GM12878 (cell line): ENCODE measurements at regions of chr6 and their contacts with region 1.

Region 1: DNA sequence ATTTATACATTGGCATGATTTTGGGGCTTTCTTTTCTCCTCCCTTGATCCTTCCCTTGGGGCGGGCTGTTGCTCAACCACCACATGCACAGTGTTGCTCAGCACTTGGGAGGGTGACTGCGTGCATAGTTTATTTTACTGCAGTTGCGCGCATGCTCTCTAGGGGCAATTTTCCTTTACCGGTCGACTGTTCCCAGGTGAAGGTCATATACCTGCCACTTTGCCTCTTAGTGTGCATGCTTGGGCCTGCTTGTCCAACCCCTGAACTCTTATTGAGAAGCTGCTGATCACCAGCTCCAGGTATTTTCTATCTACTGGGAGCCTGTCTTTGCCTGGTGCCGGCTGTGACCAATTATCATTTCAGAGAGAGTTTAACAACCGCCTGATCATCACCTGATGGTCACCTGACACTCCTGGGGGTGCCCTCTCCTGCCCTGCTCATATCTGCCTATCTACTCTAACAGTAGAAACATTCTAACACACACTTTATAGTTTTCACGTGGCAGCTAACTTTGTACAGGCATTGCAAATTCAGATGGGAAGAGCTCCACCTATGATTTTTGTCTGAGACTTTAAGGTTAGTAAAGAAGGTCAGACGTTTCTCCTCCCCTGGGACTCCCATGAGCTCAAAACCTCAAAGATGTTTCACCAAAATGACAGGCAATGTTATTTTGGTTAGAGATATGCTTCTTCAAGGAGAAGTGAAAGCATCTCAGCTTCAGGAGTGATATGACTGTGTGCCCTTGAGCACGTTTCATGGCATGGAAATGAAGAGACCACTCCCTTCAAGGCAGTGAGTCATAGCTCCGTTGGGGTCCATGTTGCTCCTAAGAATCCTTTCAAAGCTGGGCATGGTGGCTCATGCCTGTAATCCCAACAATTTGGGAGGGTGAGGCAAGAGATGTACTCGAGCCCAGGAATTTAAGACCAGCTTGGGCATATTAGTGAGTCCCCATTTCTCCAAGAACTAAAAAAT is 227.5 kb upstream of the MYLIP start:
- DNase-seq: peak; percentile 99
- ATAC-seq: peak; percentile 90
- H3K4me3 ChIP-seq: no peak overlapping the region; the same call in 1 of the 2 replicates
- H3K27ac ChIP-seq: peak overlapping the region; percentile 96
- H3K4me1 ChIP-seq: peaks cover 60% of the 10 kb centered on the region
- H3K27me3 ChIP-seq: no peaks in the 10 kb centered on the region
- CTCF ChIP-seq: peak in 1 of 3 experiments; percentile 17; a peak in 1 of 6 replicates
- EP300 ChIP-seq: peak; percentile 97 to 99
- POLR2A ChIP-seq: no peak
- RAD21 ChIP-seq: peak; percentile 35; the same call in 1 of the 2 replicates

Region 2: DNA sequence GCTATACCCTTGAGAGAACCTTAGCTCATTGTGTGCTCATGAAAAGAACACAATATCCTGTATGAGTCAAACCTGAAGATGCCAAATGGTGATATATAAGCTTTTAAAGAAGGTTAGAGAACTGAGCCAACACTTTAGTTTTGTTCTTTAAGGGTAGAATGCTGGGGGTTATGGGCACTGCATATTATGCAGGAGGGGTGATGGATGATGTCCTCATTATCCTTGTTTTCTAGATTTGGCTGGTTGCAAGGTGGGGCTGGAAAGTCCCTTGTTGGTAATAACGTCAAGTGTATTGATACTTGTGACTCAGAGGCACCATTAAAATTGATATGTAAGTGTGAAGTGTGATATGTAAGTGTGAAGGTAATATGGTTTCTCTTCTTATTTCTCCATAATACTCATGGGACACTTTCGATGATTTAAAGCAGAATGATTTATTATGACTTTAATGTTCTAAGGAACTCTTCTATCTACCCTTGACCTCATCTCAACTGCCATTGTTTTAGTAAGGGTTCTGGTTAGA is 124.9 kb before region 1 on chr6:
- CTCF ChIA-PET with region 1: interaction called, 28 read pairs
- POLR2A ChIA-PET with region 1: interaction called, 25 read pairs
- RAD21 ChIA-PET with region 1: interaction called, 130 read pairs
- SMC1A ChIA-PET with region 1: interaction called, 198 read pairs
- in situ Hi-C with region 1: no loop called
- intact Hi-C with region 1: loop called (anchors 2 kb)
- DNase-seq: peak; percentile 55
- ATAC-seq: peak; percentile 89
- H3K4me3 ChIP-seq: no peak overlapping the region
- H3K27ac ChIP-seq: no peak overlapping the region
- H3K4me1 ChIP-seq: peaks cover 7% of the 10 kb centered on the region
- H3K27me3 ChIP-seq: no peaks in the 10 kb centered on the region
- CTCF ChIP-seq: no peak
- EP300 ChIP-seq: peak; percentile 85 to 89; a peak in 2 of 4 replicates
- POLR2A ChIP-seq: no peak
- RAD21 ChIP-seq: 0 out of 2 replicates have a peak, but pooled peaks have one; percentile 16

Region 3: DNA sequence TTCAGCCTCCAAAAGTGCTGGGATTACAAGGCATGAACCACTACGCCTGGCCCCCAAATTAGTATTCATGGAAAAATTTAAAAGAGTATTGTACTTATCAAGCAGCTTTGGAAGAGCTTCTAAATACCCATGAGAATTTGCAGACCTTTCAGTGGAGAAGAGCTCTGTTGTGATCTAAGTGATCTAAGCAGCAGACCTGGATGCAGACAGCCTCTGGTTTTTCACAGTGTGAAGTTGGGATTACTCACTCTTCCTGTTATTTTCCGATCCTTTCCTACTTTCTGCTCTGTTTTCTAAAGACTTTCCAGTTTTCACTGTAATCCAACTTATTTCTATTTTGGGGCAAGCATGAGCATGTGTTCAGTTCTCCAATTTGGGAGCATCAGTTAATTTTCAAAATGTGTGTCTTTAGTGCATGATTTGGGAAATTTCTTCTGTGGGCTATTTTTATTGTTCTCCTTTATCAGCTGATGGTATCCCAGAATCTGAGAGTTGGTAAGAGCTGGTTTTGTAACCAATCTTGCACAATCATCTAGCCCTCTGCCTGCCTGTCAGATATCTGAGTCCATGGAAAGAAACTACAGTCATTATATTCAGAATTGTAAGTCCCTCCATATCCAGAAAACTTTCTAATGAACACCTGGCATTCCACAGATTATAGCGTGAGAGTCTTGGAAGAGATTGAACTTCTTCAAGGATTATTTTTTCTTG is 30.9 kb before region 1 on chr6:
- CTCF ChIA-PET with region 1: interaction called, 4 read pairs
- POLR2A ChIA-PET with region 1: interaction called, 12 read pairs
- RAD21 ChIA-PET with region 1: interaction called, 33 read pairs
- SMC1A ChIA-PET with region 1: interaction called, 183 read pairs
- in situ Hi-C with region 1: no loop called
- intact Hi-C with region 1: no loop called
- DNase-seq: no peak
- ATAC-seq: no peak
- H3K4me3 ChIP-seq: no peak overlapping the region
- H3K27ac ChIP-seq: no peak overlapping the region
- H3K4me1 ChIP-seq: no peaks in the 10 kb centered on the region
- H3K27me3 ChIP-seq: no peaks in the 10 kb centered on the region
- CTCF ChIP-seq: no peak
- EP300 ChIP-seq: no peak
- POLR2A ChIP-seq: no peak
- RAD21 ChIP-seq: no peak

Region 4: DNA sequence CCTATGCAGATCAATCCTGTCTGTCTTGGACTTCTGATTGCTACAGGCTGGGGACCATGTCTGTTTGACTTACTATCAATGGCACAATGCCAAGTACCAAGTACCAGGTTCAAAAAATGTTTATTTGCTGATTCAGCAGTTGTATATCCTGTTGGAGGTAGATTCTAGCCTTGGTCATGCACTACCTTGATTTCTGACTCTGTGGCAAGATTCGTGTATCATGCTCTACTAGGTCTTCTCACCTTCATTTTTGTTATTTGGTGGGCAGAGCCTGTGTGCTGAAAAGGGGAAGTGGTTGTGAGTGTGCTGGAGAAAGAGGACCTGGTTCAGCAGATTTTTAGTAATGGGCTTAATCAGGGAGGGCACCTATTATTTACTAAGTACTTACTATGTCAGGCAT is 35.1 kb after region 1 on chr6:
- CTCF ChIA-PET with region 1: interaction called, 23 read pairs
- POLR2A ChIA-PET with region 1: interaction called, 17 read pairs
- RAD21 ChIA-PET with region 1: interaction called, 36 read pairs
- SMC1A ChIA-PET with region 1: interaction called, 45 read pairs
- in situ Hi-C with region 1: no loop called
- intact Hi-C with region 1: no loop called
- DNase-seq: peak; percentile 75
- ATAC-seq: peak; percentile 97
- H3K4me3 ChIP-seq: no peak overlapping the region
- H3K27ac ChIP-seq: 0 out of 2 replicates have a peak overlapping the region, but pooled peaks have one; percentile 13
- H3K4me1 ChIP-seq: peaks cover 9% of the 10 kb centered on the region
- H3K27me3 ChIP-seq: no peaks in the 10 kb centered on the region
- CTCF ChIP-seq: no peak
- EP300 ChIP-seq: peak in 1 of 2 experiments; percentile 65; a peak in 1 of 4 replicates
- POLR2A ChIP-seq: no peak
- RAD21 ChIP-seq: no peak

Region 5: GRCh38 chr6:16043171-16044135 is 142.0 kb after region 1 on chr6:
- CTCF ChIA-PET with region 1: interaction called, 6 read pairs
- POLR2A ChIA-PET with region 1: interaction called, 6 read pairs
- RAD21 ChIA-PET with region 1: interaction called, 37 read pairs
- SMC1A ChIA-PET with region 1: interaction called, 37 read pairs
- in situ Hi-C with region 1: no loop called
- intact Hi-C with region 1: loop called (anchors 5 kb)
- DNase-seq: peak; percentile 62
- ATAC-seq: peak; percentile 91
- H3K4me3 ChIP-seq: no peak overlapping the region
- H3K27ac ChIP-seq: peak overlapping the region; percentile 59
- H3K4me1 ChIP-seq: peaks cover 29% of the 10 kb centered on the region
- H3K27me3 ChIP-seq: no peaks in the 10 kb centered on the region
- CTCF ChIP-seq: no peak
- EP300 ChIP-seq: peak; percentile 27 to 58; a peak in 2 of 4 replicates
- POLR2A ChIP-seq: no peak
- RAD21 ChIP-seq: no peak

Region 6: GRCh38 chr6:16168858-16169257 is 267.4 kb after region 1 on chr6:
- CTCF ChIA-PET with region 1: interaction called, 12 read pairs
- POLR2A ChIA-PET with region 1: interaction called, 3 read pairs
- RAD21 ChIA-PET with region 1: interaction called, 19 read pairs
- SMC1A ChIA-PET with region 1: interaction called, 10 read pairs
- in situ Hi-C with region 1: no loop called
- intact Hi-C with region 1: no loop called
- DNase-seq: peak; percentile 32
- ATAC-seq: peak; percentile 86
- H3K4me3 ChIP-seq: no peak overlapping the region
- H3K27ac ChIP-seq: no peak overlapping the region
- H3K4me1 ChIP-seq: peaks cover 13% of the 10 kb centered on the region
- H3K27me3 ChIP-seq: no peaks in the 10 kb centered on the region
- CTCF ChIP-seq: peak; percentile 56 to 66 (median 65)
- EP300 ChIP-seq: no peak
- POLR2A ChIP-seq: no peak
- RAD21 ChIP-seq: peak; percentile 87

Region 7: DNA sequence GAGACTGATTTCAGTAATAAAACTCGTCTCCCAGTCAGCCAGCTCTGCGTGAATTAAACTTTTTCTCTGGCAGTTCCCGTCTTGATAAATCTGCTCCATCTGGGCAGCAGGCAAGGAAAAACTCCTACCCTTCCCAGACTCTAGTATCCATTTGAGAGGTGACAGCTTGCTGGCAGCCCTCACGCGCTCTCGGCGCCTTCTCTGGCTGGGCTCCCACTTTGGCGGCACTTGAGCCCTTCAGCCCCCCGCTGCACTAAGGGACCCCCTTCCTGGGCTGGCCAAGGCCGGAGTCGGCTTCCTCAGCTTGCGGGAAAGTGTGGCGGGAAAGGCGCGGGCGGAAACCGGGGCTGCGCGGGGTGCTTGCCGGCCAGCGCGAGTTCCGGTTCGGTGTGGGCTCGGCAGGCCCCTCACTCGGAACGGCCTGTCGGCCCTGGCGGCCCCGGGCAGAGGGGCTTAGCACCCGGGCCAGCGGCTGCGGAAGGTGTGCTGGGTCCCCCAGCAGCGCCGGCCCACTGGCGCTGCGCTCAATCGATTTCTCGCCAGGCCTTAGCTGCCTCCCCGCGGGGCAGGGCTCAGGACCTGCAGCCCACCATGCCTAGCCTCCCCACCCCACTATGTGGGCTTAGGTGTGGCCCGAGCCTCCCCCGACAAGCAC is 315.2 kb after region 1 on chr6:
- CTCF ChIA-PET with region 1: no interaction called
- POLR2A ChIA-PET with region 1: no interaction called
- RAD21 ChIA-PET with region 1: no interaction called
- SMC1A ChIA-PET with region 1: no interaction called
- in situ Hi-C with region 1: no loop called
- intact Hi-C with region 1: no loop called
- DNase-seq: no peak
- ATAC-seq: no peak
- H3K4me3 ChIP-seq: no peak overlapping the region
- H3K27ac ChIP-seq: no peak overlapping the region
- H3K4me1 ChIP-seq: peaks cover 5% of the 10 kb centered on the region
- H3K27me3 ChIP-seq: no peaks in the 10 kb centered on the region; a peak in 1 of 4 replicates
- CTCF ChIP-seq: no peak
- EP300 ChIP-seq: no peak
- POLR2A ChIP-seq: no peak
- RAD21 ChIP-seq: no peak